Vagina (tissue), 2 donors: ENCODE measurements at regions of chr6 and their contacts with region 1.

Region 1: DNA sequence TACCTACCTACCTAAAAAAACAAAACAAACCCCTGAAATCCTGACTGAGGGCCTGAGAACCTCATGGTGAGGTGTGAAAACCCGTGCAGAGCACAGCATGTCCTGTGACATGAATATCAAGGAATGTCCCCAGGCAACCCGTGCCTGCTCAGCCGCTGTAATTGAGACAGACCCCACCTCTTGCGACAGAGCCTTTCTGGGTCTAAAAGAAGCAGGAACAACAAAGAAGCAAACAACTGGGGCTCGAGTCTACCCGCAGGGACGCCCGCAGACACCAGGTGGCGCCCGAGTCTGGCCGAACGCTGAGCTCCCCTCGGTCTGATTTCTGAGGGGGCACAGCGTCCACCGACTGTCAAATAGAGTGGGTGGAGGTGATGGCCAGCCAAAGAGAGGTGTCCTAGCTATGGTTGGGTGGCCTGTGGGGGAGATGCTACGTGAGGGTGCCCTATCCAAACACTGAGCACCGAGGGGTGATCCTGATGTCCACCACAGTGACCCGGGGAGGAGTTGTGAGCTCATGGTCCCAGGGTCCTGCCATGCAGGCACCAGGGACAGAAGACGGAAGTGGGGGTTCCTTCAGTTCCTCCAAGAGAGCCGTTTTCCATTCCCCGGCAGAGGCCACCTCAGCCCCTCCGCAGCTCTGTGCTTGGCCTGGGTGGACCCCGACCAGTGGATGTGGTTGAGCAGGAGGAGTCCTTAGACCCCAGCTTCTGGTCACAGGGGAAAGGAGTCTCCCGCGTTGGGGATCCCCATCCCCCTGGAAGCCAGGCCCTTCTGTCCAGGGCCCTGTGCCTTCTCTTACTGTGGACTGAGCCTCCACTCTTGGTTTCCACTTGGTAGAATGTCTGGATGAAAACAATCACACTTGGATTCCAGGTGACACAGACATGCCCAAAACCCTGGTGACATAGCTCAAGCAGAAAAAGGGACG is 268.2 kb downstream of the CDC5L start:
- DNase-seq: no peak
- H3K4me3 ChIP-seq: no peak overlapping the region
- H3K27ac ChIP-seq: no peak overlapping the region
- H3K4me1 ChIP-seq: no peaks in the 10 kb centered on the region
- H3K27me3 ChIP-seq: no peaks in the 10 kb centered on the region
- CTCF ChIP-seq: peak; percentile 76 to 96 (median 89)
- POLR2A ChIP-seq: no peak

Region 2: DNA sequence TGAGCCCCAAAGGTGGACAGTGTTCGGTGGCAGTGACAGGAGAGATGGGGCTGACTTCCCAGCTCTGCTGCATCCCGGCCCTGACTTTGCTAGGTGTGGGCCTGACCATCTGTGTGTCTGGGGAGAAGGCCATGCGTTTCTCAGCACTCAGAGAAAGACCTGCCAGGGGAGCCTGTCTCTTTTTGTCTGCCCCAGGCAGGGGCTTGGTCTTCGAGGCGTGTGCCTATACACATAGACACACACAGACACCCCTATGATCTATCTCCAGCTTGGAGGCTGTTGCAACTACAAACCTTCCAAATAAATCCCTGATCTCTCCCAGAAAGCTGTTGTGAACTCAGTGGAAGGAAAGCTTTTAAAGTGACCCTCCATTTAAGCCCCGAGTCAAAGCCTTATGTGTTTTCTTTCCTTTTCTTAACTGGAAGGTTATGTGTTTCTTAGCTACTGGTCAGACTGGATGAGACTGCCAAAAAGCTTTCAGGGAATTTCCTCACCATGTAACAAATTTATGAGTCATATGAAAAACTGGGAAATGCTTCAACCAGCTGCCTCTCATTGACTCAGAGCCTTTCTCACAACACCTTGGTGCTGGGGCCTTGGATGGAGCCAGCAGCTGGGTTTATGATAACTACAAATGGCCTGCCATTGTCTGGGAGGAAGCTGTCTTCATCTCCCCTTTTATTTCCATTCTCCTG is 165.6 kb before region 1 on chr6:
- intact Hi-C with region 1: loop called (anchors 10 kb)
- DNase-seq: no peak
- H3K4me3 ChIP-seq: no peak overlapping the region
- H3K27ac ChIP-seq: peak overlapping the region; percentile 65
- H3K4me1 ChIP-seq: peaks cover 15% of the 10 kb centered on the region
- H3K27me3 ChIP-seq: no peaks in the 10 kb centered on the region
- CTCF ChIP-seq: no peak
- POLR2A ChIP-seq: no peak

Region 3: DNA sequence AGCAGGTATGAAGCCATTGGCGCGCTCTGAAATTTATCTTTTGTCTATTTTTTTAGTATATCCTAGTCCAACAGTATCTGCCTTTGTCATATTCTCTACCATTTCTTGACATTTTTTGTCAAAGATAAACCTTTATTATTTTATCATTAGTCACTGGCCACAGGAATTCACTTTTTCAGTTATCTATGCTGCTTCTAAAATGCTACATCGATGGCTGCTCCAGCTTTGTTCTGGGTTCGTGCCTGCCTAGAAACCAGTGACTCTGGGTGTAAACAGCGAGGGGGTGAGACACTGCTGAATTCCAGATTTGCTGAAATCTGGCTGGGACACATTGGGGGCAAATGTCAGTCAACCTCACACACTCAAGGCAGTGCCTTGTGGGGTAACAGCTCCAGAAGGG is 74.8 kb before region 1 on chr6:
- intact Hi-C with region 1: no loop called
- DNase-seq: no peak
- H3K4me3 ChIP-seq: no peak overlapping the region
- H3K27ac ChIP-seq: no peak overlapping the region
- H3K4me1 ChIP-seq: no peaks in the 10 kb centered on the region
- H3K27me3 ChIP-seq: no peaks in the 10 kb centered on the region
- CTCF ChIP-seq: no peak
- POLR2A ChIP-seq: no peak

Region 4: GRCh38 chr6:45714741-45715507 is 1059.2 kb after region 1 on chr6:
- intact Hi-C with region 1: loop called (anchors 10 kb)
- DNase-seq: peak in 1 of 2 donors; percentile 79
- H3K4me3 ChIP-seq: no peak overlapping the region
- H3K27ac ChIP-seq: no peak overlapping the region
- H3K4me1 ChIP-seq: no peaks in the 10 kb centered on the region
- H3K27me3 ChIP-seq: no peaks in the 10 kb centered on the region
- CTCF ChIP-seq: peak; percentile 56 to 81 (median 71)
- POLR2A ChIP-seq: no peak

Region 5: DNA sequence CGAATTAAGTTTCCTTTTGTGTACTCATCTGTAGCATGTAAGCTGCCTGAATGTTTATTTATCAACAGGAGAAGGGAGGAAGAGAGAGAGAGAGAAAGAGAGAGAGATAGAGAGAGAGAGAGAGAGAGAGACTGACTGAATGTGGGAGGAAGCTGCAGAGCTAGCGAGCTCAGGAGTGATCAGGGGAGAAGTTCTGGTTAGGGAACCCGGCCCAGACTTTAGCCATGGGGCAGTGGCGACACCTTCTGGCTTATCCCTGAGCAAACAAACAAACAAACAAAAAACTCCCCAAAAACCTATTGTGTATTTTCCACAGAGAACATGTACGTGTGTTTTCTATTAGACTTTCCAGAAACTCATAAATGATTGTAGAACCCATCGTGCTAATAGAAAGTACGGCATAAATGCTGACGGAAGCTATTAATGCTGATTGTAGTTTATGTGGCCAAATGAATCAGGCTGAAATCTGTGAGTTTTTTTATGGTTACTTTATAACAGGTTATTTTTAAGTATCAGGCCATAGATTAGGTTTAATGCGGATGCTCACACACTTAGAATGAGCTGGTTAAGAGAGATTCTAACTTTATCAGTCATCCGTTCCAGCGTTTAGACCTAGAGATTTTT is 1267.2 kb after region 1 on chr6:
- intact Hi-C with region 1: loop called (anchors 10 kb)
- DNase-seq: peak in 1 of 2 donors; percentile 6
- H3K4me3 ChIP-seq: no peak overlapping the region
- H3K27ac ChIP-seq: no peak overlapping the region
- H3K4me1 ChIP-seq: no peaks in the 10 kb centered on the region
- H3K27me3 ChIP-seq: no peaks in the 10 kb centered on the region
- CTCF ChIP-seq: peak; percentile 4 to 80 (median 63)
- POLR2A ChIP-seq: no peak